GM18951 (cell line): ENCODE measurements at regions of chr1 and their contacts with region 1.

Region 1: DNA sequence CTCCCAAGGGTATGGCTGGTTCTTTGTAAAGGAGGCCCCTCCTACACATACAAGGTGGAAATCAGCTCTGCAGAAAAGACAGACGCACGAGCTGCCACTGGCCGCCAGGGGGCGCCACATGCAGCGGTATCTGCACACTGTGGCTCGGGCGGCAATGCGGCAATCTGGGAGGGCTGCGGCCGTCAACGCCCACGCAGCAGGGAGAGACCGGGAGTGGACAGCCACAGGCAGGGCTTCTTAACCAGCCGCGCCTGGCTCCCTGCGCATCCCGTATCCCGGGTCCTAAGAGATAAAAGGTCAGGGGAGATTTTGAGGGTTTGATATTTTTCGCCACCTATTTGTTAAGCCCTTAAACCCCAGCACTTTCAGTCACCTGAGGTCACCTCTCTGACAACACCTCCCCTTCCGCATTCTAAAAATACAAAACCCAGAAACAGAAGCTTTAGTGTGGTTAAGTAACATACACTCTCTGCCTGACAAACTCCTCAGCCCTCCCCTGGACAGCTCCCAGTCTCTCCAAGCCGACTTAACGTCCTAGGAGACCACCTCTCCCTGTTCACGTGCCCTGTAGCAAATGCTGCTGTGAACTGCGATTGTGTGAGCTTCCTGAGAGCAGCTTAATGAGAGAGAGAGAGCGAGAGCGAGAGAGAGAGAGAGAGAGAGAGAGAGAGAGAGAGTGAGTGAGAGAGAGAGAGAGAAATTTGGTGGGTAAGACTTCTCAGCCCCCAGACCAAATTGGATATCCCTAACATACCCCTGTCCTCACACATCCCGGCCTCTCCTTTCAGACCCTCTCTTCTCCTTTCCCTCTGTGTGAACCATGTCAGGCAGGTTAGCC is 13.5 kb upstream of the KCNA2 start:
- POLR2A ChIP-seq: no peak

Region 2: DNA sequence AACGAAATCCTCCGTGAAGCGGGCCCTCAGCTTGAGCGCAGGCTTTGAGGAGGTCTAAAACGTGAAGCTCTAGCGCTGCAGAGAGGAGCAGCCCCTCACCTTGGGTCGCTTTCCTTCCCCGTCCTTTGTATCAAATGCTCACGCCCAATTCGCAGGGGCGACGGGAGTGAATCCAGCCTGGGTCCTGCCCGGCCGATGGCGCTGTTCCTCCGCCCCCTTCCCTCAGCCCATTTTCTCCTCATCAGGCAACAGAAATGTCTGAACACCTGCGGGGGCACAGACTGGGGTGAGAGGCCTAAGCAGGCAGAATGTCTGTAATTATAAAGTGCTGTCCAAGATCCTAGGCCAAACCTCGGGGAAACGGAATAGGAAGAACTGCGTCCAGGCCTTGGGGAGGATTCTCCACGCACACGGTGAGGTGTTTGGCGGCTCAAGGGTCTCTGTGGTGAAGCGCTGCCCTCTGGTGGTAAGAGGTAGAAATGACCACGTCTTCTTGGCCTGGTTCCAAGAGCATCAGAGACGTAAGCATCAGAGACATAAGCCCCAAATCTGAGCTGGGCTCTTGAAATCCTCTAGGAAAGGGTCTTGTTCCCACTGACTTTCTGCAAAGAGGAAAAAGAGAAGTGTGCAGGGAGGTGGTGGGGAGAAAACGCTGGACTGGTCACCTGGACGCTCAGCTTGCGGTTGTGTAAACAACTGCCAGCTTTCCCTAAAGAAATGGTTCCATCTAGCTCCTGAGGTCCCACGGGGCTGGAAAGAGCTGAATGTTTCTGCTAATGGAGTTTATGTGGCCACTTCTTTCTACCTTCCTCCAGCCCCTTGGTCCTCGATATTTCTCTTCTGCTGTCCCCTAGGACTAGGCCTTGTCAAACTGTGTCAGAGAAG is 161.2 kb after region 1 on chr1:
- in situ Hi-C with region 1: loop called (anchors 5 kb)
- POLR2A ChIP-seq: no peak

Region 3: DNA sequence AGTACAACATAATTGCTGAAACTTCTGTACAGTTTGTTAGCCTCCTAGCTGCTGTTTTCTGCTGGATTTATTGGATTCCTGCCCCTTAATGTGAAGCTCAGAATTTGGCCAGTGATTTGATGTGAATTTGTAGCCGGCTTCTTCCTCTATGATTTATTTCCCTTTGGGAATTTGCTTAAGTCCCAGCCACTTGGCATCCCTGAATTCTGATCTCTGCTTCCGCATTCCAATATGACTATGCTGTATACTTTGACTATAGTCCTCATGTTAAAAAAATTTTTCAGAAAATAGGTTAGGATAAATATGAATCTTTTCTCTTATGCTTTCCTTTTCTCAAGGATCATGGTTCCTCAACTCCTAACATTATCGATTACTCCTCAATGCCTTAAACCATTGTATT is 356.5 kb after region 1 on chr1:
- in situ Hi-C with region 1: loop called (anchors 25 kb)
- POLR2A ChIP-seq: no peak